Caki2 (cell line): ENCODE measurements at regions of chr15 and their contacts with region 1.

Region 1: GRCh38 chr15:89776274-89777072 is at the start of gene MESP2:
- DNase-seq: peak; percentile 78
- total RNA-seq, gene MESP2: 0.43 and 1.4 TPM in 2 replicates

Region 2: DNA sequence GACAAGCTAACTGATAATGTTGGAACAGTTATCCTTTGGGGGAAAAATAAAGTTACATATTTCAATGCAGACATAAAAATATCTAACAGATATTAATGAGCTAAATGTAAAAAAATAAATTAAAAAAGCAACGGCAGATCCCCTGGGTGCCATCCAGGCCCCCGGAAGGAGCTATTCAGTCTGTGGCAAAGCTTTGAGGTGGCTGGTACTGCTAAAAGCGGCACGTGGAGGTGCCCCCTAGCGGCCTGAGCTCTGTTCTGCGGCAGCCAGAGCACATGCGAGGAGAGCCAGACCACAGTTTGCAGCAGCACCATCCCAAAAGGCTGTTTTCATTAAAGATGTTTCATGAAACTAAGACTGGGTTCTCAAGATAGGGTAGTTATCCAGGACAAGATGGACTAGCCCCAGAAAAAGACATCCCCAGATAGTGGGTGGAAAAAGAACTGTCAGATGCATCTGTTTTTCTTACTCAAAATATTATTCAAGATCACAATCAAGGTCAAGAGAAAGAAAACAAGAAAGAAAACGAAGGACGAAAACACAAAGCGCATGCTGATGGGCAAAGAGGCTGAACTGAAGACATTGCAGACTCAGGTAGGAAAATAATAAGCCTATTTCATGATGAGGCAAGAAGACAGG is 98.6 kb after region 1 on chr15:
- in situ Hi-C with region 1: loop called (anchors 10 kb)
- DNase-seq: peak; percentile 53